ENCODE measurements at regions of chrX and their contacts with region 1.

Region 1: DNA sequence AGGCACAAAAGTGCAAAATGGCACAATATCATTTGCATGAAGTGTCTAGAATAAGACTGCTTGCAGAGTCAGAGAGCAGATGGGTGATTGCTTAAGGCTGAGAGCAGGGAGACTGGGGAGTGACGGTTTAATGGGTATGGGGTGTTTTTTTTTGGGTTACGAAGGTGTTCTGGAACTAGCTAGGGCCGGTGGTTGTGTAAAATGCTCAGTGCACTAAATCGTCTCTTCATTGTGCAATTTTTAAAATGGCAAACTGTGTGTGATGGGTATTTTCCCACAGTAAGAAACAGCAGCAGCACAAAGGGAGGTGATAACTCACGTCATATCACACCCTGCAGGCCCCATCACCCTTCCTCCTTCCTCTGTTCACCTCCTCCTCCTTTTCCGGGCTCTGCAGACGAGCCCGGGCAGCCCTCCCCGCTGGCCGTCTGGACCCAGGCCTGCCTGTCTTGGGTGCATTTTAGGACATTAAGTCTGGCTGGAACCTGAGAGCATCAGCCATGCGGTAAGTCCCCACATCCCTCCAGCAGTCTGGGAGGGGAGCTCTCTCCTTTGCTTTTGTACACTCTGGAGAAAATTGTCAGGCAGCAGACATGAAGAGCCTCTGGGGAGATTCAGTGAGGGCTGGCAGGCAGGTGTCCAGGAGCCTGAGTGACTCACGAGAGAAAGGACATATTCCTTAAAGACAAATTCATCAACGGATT is 42.7 kb downstream of the ASMT start:
- DNase-seq: no peak
- H3K4me3 ChIP-seq: no peak overlapping the region
- H3K27ac ChIP-seq: no peak overlapping the region
- H3K4me1 ChIP-seq: no peaks in the 10 kb centered on the region
- H3K27me3 ChIP-seq: no peaks in the 10 kb centered on the region
- CTCF ChIP-seq: no peak
- POLR2A ChIP-seq: no peak

Region 2: DNA sequence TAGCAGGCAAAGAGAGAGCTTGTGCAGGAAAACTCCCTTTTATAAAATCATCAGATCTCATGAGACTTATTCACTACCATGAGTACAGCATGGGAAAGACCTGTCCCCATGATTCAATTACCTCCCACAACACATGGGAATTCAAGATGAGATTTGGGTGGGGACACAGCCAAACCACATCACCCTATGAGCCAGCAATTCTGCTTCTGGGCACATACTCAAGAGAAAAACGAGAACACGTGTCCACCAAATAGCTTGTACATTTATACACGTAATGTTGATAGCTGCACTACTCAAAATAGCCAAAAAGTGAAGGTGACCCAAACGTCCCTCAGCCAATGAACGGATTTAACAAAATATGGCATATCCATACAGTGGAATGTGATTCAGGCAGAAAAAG is 937.7 kb after region 1 on chrX:
- intact Hi-C with region 1: loop called (anchors 2 kb)
- DNase-seq: no peak
- H3K4me3 ChIP-seq: no peak overlapping the region
- H3K27ac ChIP-seq: no peak overlapping the region
- H3K4me1 ChIP-seq: no peaks in the 10 kb centered on the region
- H3K27me3 ChIP-seq: no peaks in the 10 kb centered on the region
- CTCF ChIP-seq: no peak
- POLR2A ChIP-seq: no peak

Measured in prostate gland (tissue), 2 donors.